ENCODE measurements at regions of chr2 and their contacts with region 1.

Region 1: GRCh38 chr2:55168221-55169154 is 63.6 kb downstream of the CLHC1 start:
- DNase-seq: peak; percentile 45
- H3K4me3 Mint-ChIP-seq: no peak overlapping the region
- H3K27ac Mint-ChIP-seq: no peak overlapping the region
- H3K4me1 Mint-ChIP-seq: peaks cover 3% of the 10 kb centered on the region
- H3K27me3 Mint-ChIP-seq: no peaks in the 10 kb centered on the region

Region 2: GRCh38 chr2:55010149-55010591 is 158.3 kb before region 1 on chr2:
- CTCF ChIA-PET with region 1: interaction called, 79 read pairs
- POLR2A ChIA-PET with region 1: no interaction called
- intact Hi-C with region 1: loop called (anchors 1 kb)
- DNase-seq: peak; percentile 40
- H3K4me3 Mint-ChIP-seq: peak overlapping the region; percentile 81
- H3K27ac Mint-ChIP-seq: peak overlapping the region; percentile 65
- H3K4me1 Mint-ChIP-seq: peaks cover 63% of the 10 kb centered on the region
- H3K27me3 Mint-ChIP-seq: no peaks in the 10 kb centered on the region

Measured in activated CD4-positive, alpha-beta memory T cell treated with anti-CD3 and anti-CD28 coated beads for 36 hours (primary cell).